ENCODE measurements at regions of chr3 and their contacts with region 1.

Region 1: GRCh38 chr3:49120438-49121131 is at the start of gene USP19:
- DNase-seq: peak; percentile 99
- H3K4me3 Mint-ChIP-seq: peak within 1 kb of the TSS; percentile 91
- H3K27ac Mint-ChIP-seq: peak within 1 kb of the TSS; percentile 87
- H3K4me1 Mint-ChIP-seq: peaks cover 9% of the 10 kb centered on the region
- H3K27me3 Mint-ChIP-seq: no peaks in the 10 kb centered on the region
- total RNA-seq, gene USP19: 57.2 and 64.9 TPM in 2 replicates

Region 2: DNA sequence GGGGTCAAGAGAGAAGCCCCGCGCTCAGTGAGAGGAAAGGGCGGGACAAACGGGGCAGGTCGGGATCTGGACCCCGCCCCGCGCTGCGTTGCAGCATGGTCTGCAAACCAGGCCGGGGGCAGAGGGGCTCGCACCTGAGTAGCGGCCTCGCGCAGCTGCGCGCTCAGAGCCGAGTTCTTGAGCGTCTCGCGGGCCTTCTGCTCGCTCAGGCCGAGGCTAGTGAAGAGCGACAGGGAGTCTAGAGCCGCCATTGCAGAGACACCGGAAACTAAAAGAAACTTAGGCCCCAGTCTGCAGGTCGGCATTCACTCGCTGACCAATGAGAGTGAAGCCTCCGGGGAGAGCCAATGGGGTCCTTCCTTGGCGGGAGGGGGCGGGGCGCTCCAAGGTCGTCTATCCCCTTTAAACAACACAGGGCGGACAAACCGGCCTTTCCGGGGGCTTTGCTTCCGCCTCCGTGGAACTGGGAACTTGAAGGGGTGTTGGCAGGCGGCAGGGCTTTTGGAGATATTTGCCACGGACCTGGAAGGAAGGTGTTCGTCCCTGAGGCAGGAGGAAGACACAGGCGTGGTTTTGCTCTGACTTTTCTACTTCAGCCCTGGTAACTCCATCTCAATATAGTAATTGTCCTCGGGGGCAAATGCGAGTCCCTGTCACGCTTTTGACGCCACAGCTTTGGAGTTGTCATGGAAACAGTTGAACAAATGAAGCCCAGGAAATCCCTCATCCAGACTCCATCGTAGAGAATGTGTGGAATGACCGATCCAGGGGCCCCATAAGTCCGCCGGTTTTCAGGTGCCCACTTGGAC is 15.9 kb before region 1 on chr3 and contains the start of gene QARS1:
- intact Hi-C with region 1: loop called (anchors 1 kb)
- DNase-seq: peak; percentile 97
- H3K4me3 Mint-ChIP-seq: peak within 1 kb of the TSS; percentile 99
- H3K27ac Mint-ChIP-seq: peak within 1 kb of the TSS; percentile 96
- H3K4me1 Mint-ChIP-seq: peaks cover 18% of the 10 kb centered on the region
- H3K27me3 Mint-ChIP-seq: no peaks in the 10 kb centered on the region
- total RNA-seq, gene QARS1: 188 and 192 TPM in 2 replicates

Region 3: GRCh38 chr3:49171119-49171774 is 50.7 kb after region 1 on chr3 and contains the start of gene KLHDC8B:
- intact Hi-C with region 1: loop called (anchors 1 kb)
- DNase-seq: peak; percentile 95
- H3K4me3 Mint-ChIP-seq: peak within 1 kb of the TSS; percentile 85
- H3K27ac Mint-ChIP-seq: peak within 1 kb of the TSS; percentile 52
- H3K4me1 Mint-ChIP-seq: peaks cover 11% of the 10 kb centered on the region
- H3K27me3 Mint-ChIP-seq: no peaks in the 10 kb centered on the region
- total RNA-seq, gene KLHDC8B: 1.5 and 2.3 TPM in 2 replicates

Region 4: GRCh38 chr3:49294343-49294742 is 173.8 kb after region 1 on chr3:
- intact Hi-C with region 1: no loop called
- DNase-seq: no peak
- H3K4me3 Mint-ChIP-seq: no peak overlapping the region
- H3K27ac Mint-ChIP-seq: no peak overlapping the region
- H3K4me1 Mint-ChIP-seq: no peaks in the 10 kb centered on the region
- H3K27me3 Mint-ChIP-seq: no peaks in the 10 kb centered on the region

Measured in activated CD4-positive, alpha-beta T cell treated with anti-CD3 and anti-CD28 coated beads, Interleukin-2, amount 10 ng/mL, durations not matched to agents 24 days and 14 days (primary cell).